ENCODE measurements at regions of chr19 and their contacts with region 1.

Region 1: DNA sequence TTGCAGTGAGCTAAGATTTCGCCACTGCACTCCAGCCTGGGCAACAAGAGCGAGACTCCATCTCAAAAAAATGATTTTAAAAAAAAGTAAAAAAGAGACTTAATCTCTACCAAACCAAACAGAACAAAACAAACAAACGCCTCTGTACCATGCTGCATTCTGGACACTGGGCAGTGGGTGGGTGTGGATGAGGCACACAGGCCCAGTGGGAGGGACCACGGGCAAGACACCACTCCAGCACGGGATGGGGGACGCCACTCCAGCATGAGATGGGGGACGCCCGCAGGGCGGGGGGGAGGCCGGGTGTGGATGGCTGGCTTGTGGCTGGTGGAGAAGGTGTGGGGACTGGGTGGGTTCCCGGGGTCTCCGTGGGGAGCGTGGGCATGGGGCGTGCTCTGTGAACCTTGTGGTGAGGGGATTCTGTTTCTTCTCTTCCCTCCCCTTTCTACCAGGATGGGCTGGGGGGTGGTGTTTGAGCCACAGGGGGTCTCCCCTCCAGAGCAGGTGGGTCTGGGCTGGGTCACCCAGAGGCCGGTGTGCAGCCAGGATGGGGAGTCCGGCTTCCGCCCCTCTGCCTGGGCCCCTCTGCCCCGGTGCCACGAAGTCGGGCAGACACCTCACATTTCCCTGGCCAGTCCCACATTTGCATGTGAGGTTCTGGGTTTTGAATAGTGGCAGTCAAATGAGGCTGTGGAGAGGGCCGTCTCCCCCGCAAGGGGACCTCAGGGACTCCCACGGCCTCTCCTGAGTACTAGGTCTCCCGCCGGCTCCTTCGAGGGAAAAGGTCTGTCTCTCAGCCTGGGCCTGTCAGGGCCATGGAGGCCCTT is 23.9 kb upstream of the MATK start:
- DNase-seq: no peak
- ATAC-seq: peak; percentile 66
- H3K4me3 Mint-ChIP-seq: peak overlapping the region; percentile 52
- H3K27ac Mint-ChIP-seq: peak overlapping the region; percentile 77
- H3K4me1 Mint-ChIP-seq: peaks cover 62% of the 10 kb centered on the region
- H3K27me3 Mint-ChIP-seq: no peaks in the 10 kb centered on the region
- CTCF ChIP-seq: no peak

Region 2: DNA sequence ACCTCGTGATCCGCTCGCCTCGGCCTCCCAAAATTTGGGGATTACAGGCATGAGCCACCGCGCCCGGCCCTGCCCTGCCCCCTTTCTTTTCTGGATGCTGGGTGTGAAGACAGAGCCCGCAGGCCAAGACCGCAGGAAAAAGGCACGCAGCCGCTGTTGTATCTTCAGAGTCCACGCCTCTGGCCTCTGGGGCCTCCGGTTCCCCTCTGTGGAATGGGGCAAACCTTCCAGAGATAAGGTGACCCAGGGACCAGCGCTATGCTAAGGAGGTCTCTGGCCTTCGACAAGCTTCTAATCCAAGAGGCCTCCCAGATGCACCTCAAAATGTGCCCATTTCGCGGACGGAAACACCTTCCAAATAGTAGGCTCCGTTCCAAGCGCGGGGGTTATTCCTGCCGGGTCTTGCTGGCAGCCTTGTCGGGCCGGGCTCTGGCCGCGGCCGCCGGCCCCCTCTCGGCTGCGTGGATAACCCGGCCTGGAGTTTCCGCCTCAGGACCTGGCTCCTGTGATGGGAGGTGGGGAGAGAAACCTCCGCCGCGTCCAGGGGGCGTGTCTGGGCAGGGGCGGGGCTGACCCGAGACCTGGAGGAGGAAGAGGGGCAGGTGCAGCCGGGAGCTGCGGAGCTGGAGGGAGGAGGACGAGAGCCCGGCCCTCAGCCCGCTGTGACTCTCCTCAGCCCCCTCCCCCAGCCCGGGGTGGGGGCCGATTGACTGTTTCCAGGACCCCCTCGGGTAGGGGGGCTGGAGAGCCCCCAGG is 88.8 kb before region 1 on chr19:
- CTCF ChIA-PET with region 1: no interaction called
- POLR2A ChIA-PET with region 1: no interaction called
- intact Hi-C with region 1: loop called (anchors 5 kb)
- DNase-seq: peak; percentile 80
- ATAC-seq: peak; percentile 99
- H3K4me3 Mint-ChIP-seq: peak overlapping the region; percentile 50
- H3K27ac Mint-ChIP-seq: no peak overlapping the region
- H3K4me1 Mint-ChIP-seq: peaks cover 12% of the 10 kb centered on the region
- H3K27me3 Mint-ChIP-seq: peaks cover 14% of the 10 kb centered on the region
- CTCF ChIP-seq: no peak

Region 3: GRCh38 chr19:3899531-3900292 is 89.6 kb after region 1 on chr19:
- CTCF ChIA-PET with region 1: no interaction called
- POLR2A ChIA-PET with region 1: no interaction called
- intact Hi-C with region 1: no loop called
- DNase-seq: no peak
- ATAC-seq: no peak
- H3K4me3 Mint-ChIP-seq: no peak overlapping the region
- H3K27ac Mint-ChIP-seq: no peak overlapping the region
- H3K4me1 Mint-ChIP-seq: no peaks in the 10 kb centered on the region
- H3K27me3 Mint-ChIP-seq: peaks cover 11% of the 10 kb centered on the region
- CTCF ChIP-seq: no peak

Region 4: DNA sequence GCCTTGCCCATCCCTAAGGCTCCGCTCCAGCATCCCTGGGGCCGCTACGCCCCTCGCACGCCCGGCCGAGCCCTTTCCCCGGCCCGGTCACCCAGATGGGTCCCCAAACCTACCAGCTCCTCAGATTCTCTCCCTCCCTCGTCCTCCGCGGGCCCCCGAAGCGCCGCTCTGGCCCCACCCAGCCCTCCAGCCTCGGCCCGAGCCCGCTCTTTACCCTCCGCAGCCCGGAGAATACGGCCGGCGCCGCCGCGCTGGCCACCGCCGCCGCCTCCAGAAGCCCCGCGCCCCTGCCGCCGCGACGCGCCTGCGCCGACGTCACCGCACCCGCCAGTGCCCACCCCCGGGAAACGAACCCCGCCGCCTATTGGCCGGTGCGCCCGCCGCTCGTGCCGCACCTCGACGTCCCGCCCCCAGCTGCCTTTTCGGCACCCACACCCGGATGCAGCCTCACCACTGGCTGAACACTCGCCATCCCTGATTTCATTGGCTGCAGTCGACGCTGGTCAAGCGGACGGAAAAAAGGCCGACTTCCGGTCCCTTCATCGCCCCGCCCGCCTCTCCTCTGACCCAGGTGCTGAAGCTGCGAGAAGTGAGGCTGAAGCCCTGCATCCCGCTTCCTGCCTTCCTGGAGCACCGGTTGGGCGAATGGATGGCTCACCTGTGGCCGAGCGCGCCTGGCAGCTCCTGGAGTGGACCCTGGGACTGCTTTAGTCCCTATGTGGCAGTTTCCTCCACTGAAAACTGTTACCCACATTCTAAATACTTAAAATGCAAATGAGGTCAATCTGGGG is 160.9 kb after region 1 on chr19 and contains the start of gene DAPK3:
- CTCF ChIA-PET with region 1: no interaction called
- POLR2A ChIA-PET with region 1: interaction called, 3 read pairs
- intact Hi-C with region 1: loop called (anchors 5 kb)
- DNase-seq: peak; percentile 94
- ATAC-seq: peak; percentile 97
- H3K4me3 Mint-ChIP-seq: peak within 1 kb of the TSS; percentile 88
- H3K27ac Mint-ChIP-seq: peak within 1 kb of the TSS; percentile 84
- H3K4me1 Mint-ChIP-seq: peaks cover 27% of the 10 kb centered on the region
- H3K27me3 Mint-ChIP-seq: no peaks in the 10 kb centered on the region
- CTCF ChIP-seq: no peak
- total RNA-seq, gene DAPK3: 37.5 and 42.2 TPM in 2 replicates